Dorsolateral prefrontal cortex (tissue), 120 donors: ENCODE measurements at regions of chr20 and their contacts with region 1.

Region 1: DNA sequence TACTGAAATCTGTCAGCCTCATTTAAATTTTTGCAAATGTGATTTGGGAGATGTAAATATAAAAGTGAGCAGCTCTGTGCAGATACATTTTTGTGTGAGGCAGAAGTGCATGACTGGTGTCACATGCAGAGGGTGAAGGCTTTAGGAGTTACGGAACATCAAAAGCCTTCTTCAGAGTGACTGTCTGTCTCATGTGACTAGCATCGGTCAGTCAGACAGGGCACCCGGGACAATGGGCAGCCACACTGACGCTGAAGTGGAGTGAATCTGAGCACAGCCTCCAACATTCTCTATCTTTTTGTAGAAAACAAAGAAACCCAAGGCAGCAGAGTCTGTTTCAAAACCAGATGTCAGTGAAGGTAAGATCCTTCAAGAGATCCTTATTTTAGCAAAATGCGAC is 7.9 kb upstream of the FAM209A start:
- DNase-seq: peak in 5 of 10 donors; percentile 45 to 59 (median 52)
- H3K4me3 ChIP-seq: peak overlapping the region in 5 of 59 donors; percentile 8 to 34 (median 14)
- H3K27ac ChIP-seq: peak overlapping the region in 51 of 59 donors; percentile 2 to 86 (median 60)
- H3K27me3 ChIP-seq: no peaks in the 10 kb centered on the region
- CTCF ChIP-seq: no peak

Region 2: GRCh38 chr20:56468316-56469082 is 48.1 kb before region 1 on chr20 and contains the start of gene RTF2:
- intact Hi-C with region 1: loop called in 1 of 2 experiments (anchors 5 kb)
- DNase-seq: peak; percentile 89 to 99 (median 93)
- H3K4me3 ChIP-seq: peak within 1 kb of the TSS; percentile 43 to 99 (median 87)
- H3K27ac ChIP-seq: peak within 1 kb of the TSS in 57 of 59 donors; percentile 35 to 91 (median 80)
- H3K27me3 ChIP-seq: no peaks in the 10 kb centered on the region
- CTCF ChIP-seq: peak in 29 of 56 donors; percentile 7 to 55 (median 25)
- total RNA-seq, gene RTF2: 74.7 to 133 (median 99.7) TPM

Region 3: GRCh38 chr20:56731022-56731421 is 214.4 kb after region 1 on chr20:
- intact Hi-C with region 1: no loop called
- DNase-seq: peak in 1 of 10 donors; percentile 74
- H3K4me3 ChIP-seq: no peak overlapping the region
- H3K27ac ChIP-seq: no peak overlapping the region
- H3K27me3 ChIP-seq: no peaks in the 10 kb centered on the region
- CTCF ChIP-seq: no peak